Heart right ventricle (tissue), 16 donors: ENCODE measurements at regions of chr2 and their contacts with region 1.

Region 1: DNA sequence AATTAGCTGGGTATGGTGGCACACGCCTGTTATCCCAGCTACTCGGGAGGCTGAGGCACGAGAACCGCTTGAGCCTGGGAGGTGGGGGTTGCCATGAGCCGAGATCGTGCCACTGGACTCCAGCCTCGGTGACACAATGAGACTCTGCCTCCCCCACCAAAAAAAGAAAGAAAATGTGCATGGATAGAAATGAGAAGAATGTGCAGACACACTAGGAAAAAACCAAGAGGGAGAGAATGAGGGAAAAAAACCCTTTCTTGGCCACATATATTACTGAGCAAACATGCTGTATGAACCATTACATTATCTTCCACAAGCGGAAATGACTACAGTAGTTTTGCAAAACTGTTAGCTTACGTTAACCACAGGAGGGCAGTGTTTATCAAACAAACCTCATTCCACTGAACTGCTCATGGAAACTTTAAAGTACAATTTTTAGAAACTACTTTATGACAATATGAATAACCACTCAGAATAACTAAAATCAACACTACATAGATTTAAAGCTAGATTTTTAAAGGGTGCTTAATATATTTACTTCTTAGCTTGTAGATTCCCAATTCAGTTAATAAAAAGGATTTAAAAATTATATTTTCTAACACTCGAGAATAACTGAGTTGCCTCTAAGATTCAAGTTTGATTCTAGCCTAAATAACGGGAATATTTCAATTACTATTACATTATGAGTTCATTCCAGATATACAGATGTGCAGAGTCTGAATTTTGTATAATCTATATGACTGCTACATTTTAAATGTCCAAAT is 26.4 kb downstream of the ASXL2 start:
- DNase-seq: peak in 1 of 2 donors; percentile 34
- ATAC-seq: peak in 7 of 8 donors; percentile 81 to 92 (median 87)
- H3K4me3 ChIP-seq: peak overlapping the region in 1 of 10 donors; percentile 3
- H3K27ac ChIP-seq: peak overlapping the region in 1 of 10 donors; percentile 60
- H3K4me1 ChIP-seq: peaks cover 0 to 45% (median 13%) of the 10 kb centered on the region in 9 donors
- H3K27me3 ChIP-seq: no peaks in the 10 kb centered on the region
- CTCF ChIP-seq: peak; percentile 43 to 84 (median 71)

Region 2: GRCh38 chr2:25772078-25772477 is 79.8 kb before region 1 on chr2:
- intact Hi-C with region 1: no loop called
- DNase-seq: no peak
- ATAC-seq: no peak
- H3K4me3 ChIP-seq: no peak overlapping the region
- H3K27ac ChIP-seq: no peak overlapping the region
- H3K4me1 ChIP-seq: no peaks in the 10 kb centered on the region
- H3K27me3 ChIP-seq: no peaks in the 10 kb centered on the region
- CTCF ChIP-seq: no peak

Region 3: GRCh38 chr2:25936889-25937545 is 85.1 kb after region 1 on chr2:
- intact Hi-C with region 1: loop called in 1 of 10 experiments (anchors 10 kb)
- DNase-seq: no peak
- ATAC-seq: no peak
- H3K4me3 ChIP-seq: no peak overlapping the region
- H3K27ac ChIP-seq: peak overlapping the region in 9 of 10 donors; percentile 27 to 80 (median 63)
- H3K4me1 ChIP-seq: peaks cover 0 to 22% (median 10%) of the 10 kb centered on the region in 9 donors
- H3K27me3 ChIP-seq: no peaks in the 10 kb centered on the region
- CTCF ChIP-seq: no peak

Region 4: DNA sequence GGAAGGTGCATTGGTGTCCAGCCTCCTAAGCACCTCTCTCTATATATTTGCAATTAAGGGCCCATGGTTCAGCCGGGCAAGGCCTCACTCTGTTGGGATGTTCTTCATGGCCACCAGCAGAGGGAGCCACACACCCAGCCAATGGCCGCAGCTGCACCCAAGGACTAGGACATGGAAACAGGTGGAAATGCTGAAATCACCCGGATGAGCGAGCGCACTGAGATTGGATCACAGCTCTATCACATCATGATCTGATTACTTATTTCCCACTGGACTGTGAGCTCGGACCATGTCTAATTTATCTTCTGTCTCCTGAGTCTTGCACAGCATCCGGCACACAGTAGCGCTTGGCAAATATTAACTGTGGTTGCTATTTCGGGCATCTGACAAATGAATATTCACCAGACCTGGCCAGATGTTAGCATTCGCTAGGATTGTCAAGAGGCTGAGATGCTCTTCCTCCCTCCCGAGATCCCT is 99.2 kb after region 1 on chr2:
- intact Hi-C with region 1: loop called in 6 of 10 experiments (anchors 5 to 10 kb)
- DNase-seq: peak; percentile 75 to 77
- ATAC-seq: peak; percentile 90 to 97 (median 94)
- H3K4me3 ChIP-seq: peak overlapping the region in 4 of 10 donors; percentile 3 to 27 (median 14)
- H3K27ac ChIP-seq: no peak overlapping the region
- H3K4me1 ChIP-seq: peaks cover 0 to 18% (median 7%) of the 10 kb centered on the region in 9 donors
- H3K27me3 ChIP-seq: no peaks in the 10 kb centered on the region
- CTCF ChIP-seq: peak; percentile 76 to 98 (median 95)

Region 5: DNA sequence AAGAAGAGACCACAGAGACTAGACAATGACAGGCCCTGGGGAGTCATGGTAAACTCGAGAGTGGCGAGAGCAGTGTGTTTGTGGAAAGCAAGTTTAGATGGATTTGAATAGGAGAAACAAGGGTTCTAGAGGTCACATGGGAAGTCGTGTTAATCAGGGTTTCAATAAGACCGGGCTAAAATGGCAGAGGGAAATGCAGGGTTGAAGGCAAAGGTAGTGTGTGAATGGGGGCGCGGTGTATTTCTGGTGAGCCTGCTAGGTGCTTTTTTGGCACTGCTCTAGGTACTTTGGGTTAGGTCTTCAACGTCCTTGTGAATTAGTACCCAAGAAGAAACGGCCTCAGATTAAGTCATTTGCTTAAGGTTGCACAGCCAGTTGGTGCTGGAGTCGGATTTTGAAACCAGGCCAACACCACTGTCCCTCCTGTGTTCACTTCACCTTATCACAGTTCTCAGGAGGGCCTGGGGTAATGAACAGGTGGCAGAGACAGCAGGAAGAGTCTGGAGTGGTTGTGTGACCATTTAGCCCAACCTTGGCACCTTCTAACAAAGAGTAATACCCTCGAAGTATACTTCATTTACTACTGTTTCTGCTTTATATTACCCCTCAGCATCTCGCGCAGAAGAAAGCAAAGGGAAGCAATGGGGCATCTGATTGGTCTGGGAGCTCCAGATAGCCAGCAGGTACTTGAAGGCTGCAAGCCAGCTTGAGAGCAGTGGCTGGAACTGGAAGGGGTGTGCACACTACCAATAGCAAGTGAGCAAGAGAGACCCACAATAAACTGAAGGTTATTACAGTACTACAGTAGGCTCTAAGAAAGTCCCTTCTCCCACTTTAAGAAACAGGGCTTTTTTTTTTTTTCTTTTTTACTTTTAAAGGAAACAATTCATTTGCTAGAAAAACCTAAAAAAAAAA is 287.6 kb after region 1 on chr2:
- intact Hi-C with region 1: loop called in 4 of 10 experiments (anchors 5 to 10 kb)
- DNase-seq: no peak
- ATAC-seq: no peak
- H3K4me3 ChIP-seq: no peak overlapping the region
- H3K27ac ChIP-seq: no peak overlapping the region
- H3K4me1 ChIP-seq: peaks cover 0 to 14% (median 4%) of the 10 kb centered on the region in 9 donors
- H3K27me3 ChIP-seq: no peaks in the 10 kb centered on the region
- CTCF ChIP-seq: no peak